ENCODE measurements at regions of chr7 and their contacts with region 1.

Region 1: GRCh38 chr7:98168181-98168905 is 42.9 kb upstream of the BHLHA15 start:
- DNase-seq: peak; percentile 16
- ATAC-seq: peak; percentile 74
- H3K4me3 ChIP-seq: no peak overlapping the region
- H3K27ac ChIP-seq: no peak overlapping the region
- H3K4me1 ChIP-seq: no peaks in the 10 kb centered on the region
- H3K27me3 ChIP-seq: no peaks in the 10 kb centered on the region
- CTCF ChIP-seq: peak; percentile 55 to 76 (median 64)
- EP300 ChIP-seq: no peak
- POLR2A ChIP-seq: no peak
- RAD21 ChIP-seq: peak; percentile 87

Region 2: GRCh38 chr7:98014352-98014751 is 154.0 kb before region 1 on chr7:
- CTCF ChIA-PET with region 1: interaction called, 450 read pairs
- POLR2A ChIA-PET with region 1: no interaction called
- RAD21 ChIA-PET with region 1: interaction called, 4 read pairs
- SMC1A ChIA-PET with region 1: interaction called, 195 read pairs
- in situ Hi-C with region 1: no loop called
- intact Hi-C with region 1: no loop called
- DNase-seq: no peak
- ATAC-seq: no peak
- H3K4me3 ChIP-seq: no peak overlapping the region
- H3K27ac ChIP-seq: no peak overlapping the region
- H3K4me1 ChIP-seq: no peaks in the 10 kb centered on the region
- H3K27me3 ChIP-seq: no peaks in the 10 kb centered on the region
- CTCF ChIP-seq: no peak
- EP300 ChIP-seq: no peak
- POLR2A ChIP-seq: no peak
- RAD21 ChIP-seq: no peak

Region 3: DNA sequence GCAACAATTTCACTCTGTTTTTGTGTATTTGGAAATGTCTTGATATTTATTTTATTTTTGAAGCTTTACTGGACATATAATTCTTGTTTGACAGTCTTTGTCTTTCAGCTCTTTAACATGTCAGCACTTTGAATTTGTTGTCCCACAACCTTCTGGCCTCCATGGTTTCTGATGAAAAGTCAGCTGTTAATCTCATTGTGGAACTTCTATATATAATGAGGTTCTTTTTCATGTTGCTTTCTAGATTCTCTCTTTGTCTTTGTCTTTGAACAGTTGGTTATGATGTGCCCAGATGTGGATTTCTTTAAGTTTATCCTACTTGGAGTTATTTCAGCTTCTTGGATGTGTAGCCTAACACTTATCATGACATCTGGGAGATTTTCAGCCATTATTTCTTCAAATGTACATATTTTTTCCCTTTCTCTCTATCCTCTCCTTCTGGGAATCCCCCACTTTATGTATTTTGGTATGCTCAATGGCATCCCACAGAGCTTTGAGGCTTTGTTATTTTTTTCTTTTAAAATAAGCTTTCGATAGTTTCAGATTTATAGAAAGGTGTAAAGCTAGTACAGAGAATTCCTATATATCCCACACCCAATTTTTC is 71.2 kb before region 1 on chr7:
- CTCF ChIA-PET with region 1: interaction called, 11 read pairs
- POLR2A ChIA-PET with region 1: no interaction called
- RAD21 ChIA-PET with region 1: interaction called, 3 read pairs
- SMC1A ChIA-PET with region 1: interaction called, 7 read pairs
- in situ Hi-C with region 1: no loop called
- intact Hi-C with region 1: no loop called
- DNase-seq: no peak
- ATAC-seq: no peak
- H3K4me3 ChIP-seq: no peak overlapping the region
- H3K27ac ChIP-seq: no peak overlapping the region
- H3K4me1 ChIP-seq: no peaks in the 10 kb centered on the region
- H3K27me3 ChIP-seq: no peaks in the 10 kb centered on the region
- CTCF ChIP-seq: no peak
- EP300 ChIP-seq: no peak
- POLR2A ChIP-seq: no peak
- RAD21 ChIP-seq: no peak

Region 4: GRCh38 chr7:98119256-98119918 is 49.0 kb before region 1 on chr7:
- CTCF ChIA-PET with region 1: interaction called, 11 read pairs
- POLR2A ChIA-PET with region 1: no interaction called
- RAD21 ChIA-PET with region 1: interaction called, 6 read pairs
- SMC1A ChIA-PET with region 1: interaction called, 8 read pairs
- in situ Hi-C with region 1: no loop called
- intact Hi-C with region 1: no loop called
- DNase-seq: no peak
- ATAC-seq: no peak
- H3K4me3 ChIP-seq: no peak overlapping the region
- H3K27ac ChIP-seq: no peak overlapping the region
- H3K4me1 ChIP-seq: no peaks in the 10 kb centered on the region
- H3K27me3 ChIP-seq: no peaks in the 10 kb centered on the region
- CTCF ChIP-seq: no peak
- EP300 ChIP-seq: no peak
- POLR2A ChIP-seq: no peak
- RAD21 ChIP-seq: no peak

Region 5: DNA sequence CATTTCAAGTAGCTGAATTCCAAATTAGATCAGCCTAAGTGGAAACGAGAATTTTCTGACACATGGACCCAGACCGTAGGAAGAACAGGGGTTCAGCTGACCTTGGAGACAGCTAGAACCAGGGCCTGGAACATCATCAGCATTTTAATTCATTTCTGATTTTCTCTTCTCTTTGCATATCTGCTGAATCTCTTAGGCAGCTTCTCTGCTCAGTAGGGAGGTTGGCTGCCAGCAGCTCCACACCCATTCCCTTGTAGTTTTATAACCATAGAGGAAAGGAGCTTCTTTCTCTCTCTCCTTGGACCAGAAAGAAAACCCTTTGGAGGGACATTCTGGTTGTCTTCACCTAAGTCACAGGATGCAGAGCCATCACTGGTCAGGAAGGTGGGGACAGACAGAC is 25.7 kb before region 1 on chr7:
- CTCF ChIA-PET with region 1: interaction called, 13 read pairs
- POLR2A ChIA-PET with region 1: no interaction called
- RAD21 ChIA-PET with region 1: interaction called, 5 read pairs
- SMC1A ChIA-PET with region 1: interaction called, 4 read pairs
- in situ Hi-C with region 1: no loop called
- intact Hi-C with region 1: no loop called
- DNase-seq: no peak
- ATAC-seq: no peak
- H3K4me3 ChIP-seq: no peak overlapping the region
- H3K27ac ChIP-seq: no peak overlapping the region
- H3K4me1 ChIP-seq: peaks cover 7% of the 10 kb centered on the region
- H3K27me3 ChIP-seq: no peaks in the 10 kb centered on the region
- CTCF ChIP-seq: no peak
- EP300 ChIP-seq: no peak
- POLR2A ChIP-seq: no peak
- RAD21 ChIP-seq: no peak

Region 6: DNA sequence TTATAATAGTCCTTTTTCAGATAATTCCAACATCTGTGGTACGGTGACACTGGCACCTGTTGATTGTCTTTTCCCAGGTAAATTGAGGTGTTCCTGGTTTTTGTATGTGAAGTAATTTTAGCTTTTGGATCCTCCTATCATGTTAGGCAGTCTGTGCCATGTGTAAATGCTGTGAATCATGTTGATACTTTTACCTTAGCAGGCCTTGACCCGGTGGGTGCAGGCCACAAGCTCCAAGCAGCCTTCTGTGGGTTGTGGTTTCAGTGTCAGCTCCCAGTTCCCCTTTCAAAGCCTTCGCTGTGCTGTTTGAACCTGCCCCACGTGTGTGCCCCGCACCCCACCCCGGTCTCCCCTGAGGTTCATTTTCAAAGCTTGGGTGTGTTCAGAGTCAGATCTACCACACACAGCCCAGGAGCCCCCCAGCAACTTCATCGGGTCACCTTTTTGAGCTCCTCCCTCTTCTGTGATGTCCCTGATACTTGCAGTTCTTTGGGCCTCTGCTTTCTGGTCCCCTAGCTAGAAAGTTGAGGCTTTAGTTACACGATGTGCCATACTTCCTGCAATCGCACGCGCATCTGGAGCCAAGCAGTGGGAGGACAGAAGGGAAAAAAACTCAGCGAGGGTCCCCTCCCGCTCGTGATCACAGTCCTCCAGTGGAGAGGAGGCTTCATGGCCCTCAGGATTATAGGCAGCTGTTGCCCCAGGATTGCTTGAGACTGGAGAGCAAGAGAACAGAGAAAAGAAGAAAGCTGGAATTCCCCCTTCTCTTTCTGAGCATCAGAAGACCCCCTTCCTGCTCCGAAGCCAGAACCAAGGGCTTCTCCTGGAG is 34.2 kb after region 1 on chr7:
- CTCF ChIA-PET with region 1: interaction called, 17 read pairs
- POLR2A ChIA-PET with region 1: no interaction called
- RAD21 ChIA-PET with region 1: interaction called, 7 read pairs
- SMC1A ChIA-PET with region 1: interaction called, 6 read pairs
- in situ Hi-C with region 1: no loop called
- intact Hi-C with region 1: no loop called
- DNase-seq: peak; percentile 94
- ATAC-seq: peak; percentile 94
- H3K4me3 ChIP-seq: peak overlapping the region; percentile 54; the same call in 1 of the 2 replicates
- H3K27ac ChIP-seq: peak overlapping the region; percentile 58
- H3K4me1 ChIP-seq: peaks cover 47% of the 10 kb centered on the region
- H3K27me3 ChIP-seq: no peaks in the 10 kb centered on the region
- CTCF ChIP-seq: no peak
- EP300 ChIP-seq: peak; percentile 95 to 98
- POLR2A ChIP-seq: no peak
- RAD21 ChIP-seq: 0 out of 2 replicates have a peak, but pooled peaks have one; percentile 5

Region 7: DNA sequence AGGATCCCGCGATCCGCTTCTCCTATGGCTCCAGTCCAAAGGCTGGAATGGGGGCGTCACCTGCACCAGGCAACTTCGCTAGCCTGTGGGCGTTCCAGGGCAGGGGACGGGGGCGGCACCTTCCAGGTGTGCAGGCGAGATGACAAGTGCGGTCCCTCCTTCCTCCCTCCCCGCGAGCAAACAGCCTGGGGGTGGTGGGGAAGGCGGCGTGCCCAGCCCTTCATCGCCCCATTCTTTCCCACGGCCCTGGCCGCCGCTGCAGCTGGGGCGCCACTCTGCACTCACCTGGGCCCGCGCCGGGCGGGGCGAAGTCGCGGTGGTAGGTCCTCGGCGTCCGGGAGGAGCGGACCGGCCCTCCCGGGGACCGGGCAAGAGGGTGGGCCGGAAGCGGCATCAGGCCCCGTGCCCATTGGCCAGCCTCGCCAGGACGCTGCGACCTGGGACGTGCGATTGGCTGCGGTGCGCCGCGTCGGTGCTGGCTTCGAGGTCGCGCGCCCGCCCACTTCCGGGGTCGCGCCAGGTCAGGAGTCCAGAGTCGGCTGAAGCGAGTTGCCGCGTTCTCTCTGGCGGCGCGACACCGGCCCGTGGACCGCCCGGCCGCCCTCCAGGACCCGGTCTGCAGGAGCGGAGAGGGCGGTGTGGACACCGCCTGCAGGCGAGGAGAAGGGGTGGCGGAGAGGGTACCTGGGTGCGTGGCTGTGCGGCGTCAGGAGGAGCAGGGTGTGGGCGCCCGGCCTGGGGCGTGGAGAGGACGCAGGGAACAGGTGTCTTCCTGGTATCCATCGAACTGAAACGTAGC is 83.7 kb after region 1 on chr7 and contains the start of gene TECPR1:
- CTCF ChIA-PET with region 1: interaction called, 11 read pairs
- POLR2A ChIA-PET with region 1: no interaction called
- RAD21 ChIA-PET with region 1: interaction called, 14 read pairs
- SMC1A ChIA-PET with region 1: interaction called, 9 read pairs
- in situ Hi-C with region 1: no loop called
- intact Hi-C with region 1: no loop called
- DNase-seq: peak; percentile 66
- ATAC-seq: peak; percentile 99
- H3K4me3 ChIP-seq: peak within 1 kb of the TSS; percentile 83
- H3K27ac ChIP-seq: peak within 1 kb of the TSS; percentile 59
- H3K4me1 ChIP-seq: peaks cover 10% of the 10 kb centered on the region
- H3K27me3 ChIP-seq: no peaks in the 10 kb centered on the region
- CTCF ChIP-seq: 0 out of 6 replicates have a peak, but pooled peaks of 1 of the 3 experiments have one; percentile 1
- EP300 ChIP-seq: no peak
- POLR2A ChIP-seq: peak; percentile 86
- RAD21 ChIP-seq: no peak
- polyA plus RNA-seq, gene TECPR1: 0.26 to 0.51 TPM

Region 8: DNA sequence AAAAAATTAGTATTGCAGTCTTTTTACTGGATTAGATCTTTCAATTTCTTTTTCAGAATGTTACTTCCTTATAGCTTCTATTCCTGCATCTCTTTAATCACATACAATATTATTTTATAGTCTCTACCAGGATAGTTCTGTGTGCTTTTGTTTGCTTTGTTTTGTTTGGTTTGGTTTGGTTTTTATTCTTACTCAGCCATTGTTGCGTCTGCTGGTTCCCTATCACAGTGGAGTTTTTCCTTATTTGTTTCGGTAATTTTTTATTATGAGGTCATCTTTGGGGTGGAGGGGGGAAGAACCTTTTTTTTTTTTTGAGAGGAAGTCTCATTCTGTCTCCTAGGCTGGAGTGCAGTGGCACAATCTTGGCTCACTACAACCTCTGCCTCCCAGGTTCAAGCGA is 241.5 kb after region 1 on chr7:
- CTCF ChIA-PET with region 1: no interaction called
- POLR2A ChIA-PET with region 1: no interaction called
- RAD21 ChIA-PET with region 1: no interaction called
- SMC1A ChIA-PET with region 1: no interaction called
- in situ Hi-C with region 1: no loop called
- intact Hi-C with region 1: no loop called
- DNase-seq: no peak
- ATAC-seq: no peak
- H3K4me3 ChIP-seq: no peak overlapping the region
- H3K27ac ChIP-seq: no peak overlapping the region
- H3K4me1 ChIP-seq: no peaks in the 10 kb centered on the region
- H3K27me3 ChIP-seq: peaks cover 0 to 3% of the 10 kb centered on the region in 2 experiments; a peak in 2 of 4 replicates
- CTCF ChIP-seq: no peak
- EP300 ChIP-seq: no peak
- POLR2A ChIP-seq: no peak
- RAD21 ChIP-seq: no peak

Region 9: GRCh38 chr7:99270683-99271082 is 1102.3 kb after region 1 on chr7:
- CTCF ChIA-PET with region 1: no interaction called
- POLR2A ChIA-PET with region 1: no interaction called
- RAD21 ChIA-PET with region 1: no interaction called
- SMC1A ChIA-PET with region 1: no interaction called
- in situ Hi-C with region 1: no loop called
- intact Hi-C with region 1: no loop called
- DNase-seq: no peak
- ATAC-seq: no peak
- H3K4me3 ChIP-seq: no peak overlapping the region
- H3K27ac ChIP-seq: no peak overlapping the region
- H3K4me1 ChIP-seq: peaks cover 6% of the 10 kb centered on the region
- H3K27me3 ChIP-seq: peaks cover 0 to 2% of the 10 kb centered on the region in 2 experiments; a peak in 1 of 4 replicates
- CTCF ChIP-seq: no peak
- EP300 ChIP-seq: no peak
- POLR2A ChIP-seq: no peak
- RAD21 ChIP-seq: no peak

Measured in GM12878 (cell line).